GM10248 (cell line): ENCODE measurements at regions of chr18 and their contacts with region 1.

Region 1: DNA sequence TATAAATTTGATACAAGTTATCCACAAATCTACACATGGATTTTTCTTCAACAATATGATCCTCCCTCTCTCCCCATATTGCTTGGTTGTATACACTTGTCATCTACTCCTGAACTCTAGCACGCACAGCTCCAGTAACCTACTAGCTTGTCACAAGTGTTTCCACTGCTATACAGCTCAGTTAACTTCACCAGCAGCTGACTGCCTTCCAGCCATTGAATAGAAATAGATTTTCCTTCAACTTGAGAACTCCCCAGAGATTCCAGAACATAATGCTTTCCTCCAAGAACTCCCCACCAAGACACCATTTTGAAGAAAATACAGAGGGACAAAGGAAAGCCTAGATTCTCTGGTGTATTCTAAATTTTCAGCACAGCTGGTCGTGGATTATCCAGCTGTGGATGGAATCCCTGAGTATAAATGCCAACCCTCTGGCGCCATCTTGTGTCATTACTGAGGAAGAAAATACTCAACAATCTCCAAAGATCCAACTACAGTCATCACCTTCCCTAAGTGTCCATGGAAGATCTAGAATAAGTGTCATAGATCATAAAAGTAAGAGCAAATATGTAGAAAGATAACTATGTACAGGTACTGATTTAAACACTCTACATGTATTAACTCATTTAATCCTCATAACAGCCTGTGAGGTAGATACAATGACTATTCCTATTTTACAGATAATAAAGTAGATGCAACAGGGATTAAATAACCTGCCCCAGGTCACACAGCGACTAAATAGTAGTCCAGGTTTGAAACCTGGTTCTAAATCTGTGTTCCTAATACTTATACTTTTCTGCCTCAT is 156.7 kb downstream of the ARHGAP28 start:
- DNase-seq: peak; percentile 32
- CTCF ChIP-seq: peak; percentile 48

Region 2: DNA sequence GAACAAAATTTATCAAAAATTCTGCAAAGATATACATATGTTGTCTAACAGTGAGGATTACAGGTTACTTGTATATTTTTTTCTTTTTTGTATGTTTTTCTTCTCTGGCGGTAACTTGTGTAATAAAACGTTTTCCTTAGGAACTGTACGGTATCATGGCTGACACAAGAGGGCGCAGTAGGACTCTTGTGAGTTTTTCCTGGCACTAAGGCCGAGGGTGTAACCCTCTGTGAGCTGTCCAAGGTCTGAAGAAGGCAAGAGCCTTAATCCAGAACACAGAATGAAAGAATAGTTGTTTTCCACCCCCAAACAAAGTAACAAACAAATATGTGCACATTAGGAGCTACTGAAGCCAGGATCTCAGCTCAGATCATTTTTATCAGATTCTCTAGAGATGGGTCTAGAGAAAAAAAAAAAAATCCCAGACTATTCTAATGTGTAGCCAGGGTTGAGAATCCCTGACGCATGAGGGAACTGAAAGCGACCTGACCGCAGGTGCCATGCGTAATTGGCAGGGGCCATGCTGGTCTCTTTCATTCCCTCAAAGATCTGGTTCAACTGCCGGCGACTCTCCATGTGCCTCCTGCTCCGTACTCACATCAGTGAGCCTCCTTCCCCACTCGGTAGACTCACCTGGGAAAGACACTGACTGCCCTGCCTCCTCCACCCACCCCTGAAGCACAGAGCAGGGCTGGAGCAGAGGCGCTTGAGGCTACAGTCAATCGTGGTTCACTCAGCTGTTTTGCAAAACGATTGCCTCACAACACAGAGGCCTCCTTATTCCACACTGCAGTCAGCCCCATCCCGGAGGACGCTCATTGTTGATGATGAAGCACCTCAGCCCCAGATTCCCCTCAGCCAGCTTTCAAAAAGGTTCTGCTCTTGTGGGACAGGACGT is 1017.7 kb before region 1 on chr18:
- CTCF ChIA-PET with region 1: interaction called, 24 read pairs
- POLR2A ChIA-PET with region 1: no interaction called
- DNase-seq: peak; percentile 45
- CTCF ChIP-seq: peak; percentile 80

Region 3: GRCh38 chr18:6333981-6334380 is 552.2 kb before region 1 on chr18:
- CTCF ChIA-PET with region 1: no interaction called
- POLR2A ChIA-PET with region 1: no interaction called
- DNase-seq: no peak
- CTCF ChIP-seq: no peak

Region 4: DNA sequence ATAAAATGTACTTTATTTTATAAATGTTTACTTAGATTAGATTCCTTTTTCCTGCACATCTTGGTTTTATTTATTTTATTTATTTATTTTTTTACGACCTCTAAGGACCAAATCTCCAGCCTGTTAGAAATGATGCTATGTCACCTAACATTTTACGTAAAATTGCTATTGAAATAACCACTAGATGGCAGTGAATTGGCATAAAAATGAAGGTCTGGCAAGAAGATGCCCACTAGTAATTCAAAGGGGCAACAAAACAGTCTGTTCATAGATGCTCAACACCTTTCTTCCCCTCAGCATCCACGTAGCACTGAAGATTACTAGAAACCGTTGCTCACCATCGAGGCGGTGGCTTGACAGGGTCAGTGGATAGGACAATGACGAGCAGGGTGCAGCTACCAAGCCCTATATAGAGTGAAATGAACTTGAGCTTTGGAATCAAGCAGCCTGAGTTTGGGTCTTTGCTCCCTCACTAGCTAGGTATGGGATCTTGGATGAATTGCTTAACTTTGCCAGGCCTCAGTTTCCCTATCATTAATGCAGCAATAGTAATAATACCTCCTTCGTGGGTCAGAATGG is 342.8 kb before region 1 on chr18:
- CTCF ChIA-PET with region 1: interaction called, 22 read pairs
- POLR2A ChIA-PET with region 1: no interaction called
- DNase-seq: peak; percentile 17
- CTCF ChIP-seq: peak; percentile 51